Heart left ventricle (tissue), 16 donors: ENCODE measurements at regions of chr3 and their contacts with region 1.

Region 1: DNA sequence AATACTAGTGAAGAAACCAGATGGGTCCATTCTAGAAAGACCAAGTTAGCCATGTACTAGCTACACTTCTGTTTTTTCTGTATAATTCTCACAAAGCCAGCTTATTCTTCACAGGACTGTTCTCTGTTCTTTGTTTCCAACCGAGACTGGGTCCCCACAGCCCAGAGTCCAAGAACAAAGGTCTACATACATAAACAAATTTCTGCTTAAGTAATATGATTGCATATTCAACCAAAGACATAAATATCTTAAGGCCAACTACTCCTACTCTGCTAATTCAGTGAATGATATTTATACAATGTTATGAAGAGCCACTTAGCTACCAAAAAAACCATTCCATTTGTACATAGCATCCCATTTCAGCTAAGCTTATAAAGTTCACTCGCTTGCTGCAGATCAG is 299.8 kb upstream of the CCDC54 start:
- DNase-seq: no peak
- ATAC-seq: no peak
- H3K4me3 ChIP-seq: no peak overlapping the region
- H3K27ac ChIP-seq: no peak overlapping the region
- H3K4me1 ChIP-seq: no peaks in the 10 kb centered on the region
- H3K27me3 ChIP-seq: no peaks in the 10 kb centered on the region
- CTCF ChIP-seq: no peak
- POLR2A ChIP-seq: no peak

Region 2: DNA sequence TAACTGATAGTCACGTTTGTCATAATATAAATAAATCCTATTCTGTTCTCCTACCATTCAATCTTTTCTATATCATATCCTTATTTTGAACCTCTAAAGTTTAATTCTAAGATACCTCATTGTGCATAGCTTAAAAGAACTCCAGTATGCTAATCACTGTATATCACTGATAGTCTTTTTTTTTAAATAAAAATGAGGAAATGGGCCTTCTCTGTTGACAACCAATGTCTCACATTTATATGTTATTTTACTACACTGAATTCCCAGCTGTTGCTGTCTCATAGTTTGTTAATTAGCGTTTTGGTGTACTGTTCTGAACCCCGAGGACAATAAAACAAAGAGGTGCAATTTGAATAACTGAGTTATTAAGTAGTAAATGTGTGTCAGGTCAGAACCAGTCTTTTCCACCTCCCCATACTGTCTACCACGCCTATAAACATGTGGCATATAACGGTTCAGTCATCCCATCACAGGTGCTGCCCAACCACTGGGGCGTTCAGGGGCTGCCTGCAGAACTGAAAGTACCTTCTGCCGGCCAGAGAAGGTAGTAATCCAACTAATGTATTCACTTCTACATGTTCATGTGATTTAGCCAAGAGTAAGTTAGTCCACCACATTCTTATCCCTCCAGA is 1223.5 kb before region 1 on chr3:
- intact Hi-C with region 1: no loop called
- DNase-seq: no peak
- ATAC-seq: peak in 1 of 4 donors; percentile 6
- H3K4me3 ChIP-seq: no peak overlapping the region
- H3K27ac ChIP-seq: no peak overlapping the region
- H3K4me1 ChIP-seq: peaks cover 0 to 34% (median 24%) of the 10 kb centered on the region in 12 donors
- H3K27me3 ChIP-seq: no peaks in the 10 kb centered on the region
- CTCF ChIP-seq: no peak
- POLR2A ChIP-seq: no peak

Region 3: DNA sequence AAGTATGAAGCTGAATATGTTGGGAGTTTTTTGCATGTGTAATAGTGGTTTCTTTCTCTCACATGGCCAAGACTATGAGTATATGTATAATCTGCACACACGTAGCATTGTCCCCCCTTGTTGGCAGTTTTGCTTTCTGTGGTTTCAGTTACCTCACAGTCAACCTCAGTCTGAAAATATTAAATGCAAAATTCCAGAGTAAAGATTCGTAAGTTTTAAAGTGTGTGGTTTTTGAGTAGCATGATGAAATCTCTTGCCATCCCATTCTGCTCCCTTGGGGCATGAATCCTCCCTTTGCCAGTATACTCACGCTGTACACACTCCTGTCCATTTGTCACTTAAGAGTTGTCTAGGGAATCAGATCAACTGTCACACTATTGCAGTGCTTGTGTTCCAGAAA is 442.1 kb before region 1 on chr3:
- intact Hi-C with region 1: loop called in 1 of 10 experiments (anchors 10 kb)
- DNase-seq: no peak
- ATAC-seq: no peak
- H3K4me3 ChIP-seq: no peak overlapping the region
- H3K27ac ChIP-seq: no peak overlapping the region
- H3K4me1 ChIP-seq: no peaks in the 10 kb centered on the region
- H3K27me3 ChIP-seq: no peaks in the 10 kb centered on the region
- CTCF ChIP-seq: no peak
- POLR2A ChIP-seq: no peak

Region 4: DNA sequence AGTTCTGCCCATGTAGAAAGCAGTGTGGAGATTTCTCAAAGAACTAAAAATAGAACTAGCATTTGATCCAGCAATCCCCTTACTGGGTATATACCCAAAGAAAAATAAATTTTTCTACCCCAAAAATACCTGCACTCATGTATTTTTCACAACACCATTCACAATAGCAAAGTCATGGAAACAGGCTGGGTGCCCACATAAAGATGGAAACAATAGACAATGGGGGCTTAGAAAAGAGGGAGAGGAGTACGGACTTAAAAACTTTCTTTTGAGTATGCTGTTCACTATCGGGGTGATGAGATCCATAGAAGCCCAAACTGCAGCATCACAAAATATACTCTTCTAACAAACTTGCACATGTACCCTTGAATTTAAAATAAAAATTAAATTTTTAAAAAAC is 45.3 kb before region 1 on chr3:
- intact Hi-C with region 1: no loop called
- DNase-seq: no peak
- ATAC-seq: no peak
- H3K4me3 ChIP-seq: no peak overlapping the region
- H3K27ac ChIP-seq: no peak overlapping the region
- H3K4me1 ChIP-seq: no peaks in the 10 kb centered on the region
- H3K27me3 ChIP-seq: no peaks in the 10 kb centered on the region
- CTCF ChIP-seq: no peak
- POLR2A ChIP-seq: no peak